ENCODE measurements at regions of chr5 and their contacts with region 1.

Region 1: GRCh38 chr5:38719916-38720315 is 125.9 kb upstream of the OSMR start:
- DNase-seq: peak; percentile 90
- H3K4me3 ChIP-seq: peak overlapping the region; percentile 11
- H3K27ac ChIP-seq: peak overlapping the region; percentile 90
- H3K4me1 ChIP-seq: peaks cover 87% of the 10 kb centered on the region
- H3K27me3 ChIP-seq: no peaks in the 10 kb centered on the region
- CTCF ChIP-seq: no peak

Region 2: DNA sequence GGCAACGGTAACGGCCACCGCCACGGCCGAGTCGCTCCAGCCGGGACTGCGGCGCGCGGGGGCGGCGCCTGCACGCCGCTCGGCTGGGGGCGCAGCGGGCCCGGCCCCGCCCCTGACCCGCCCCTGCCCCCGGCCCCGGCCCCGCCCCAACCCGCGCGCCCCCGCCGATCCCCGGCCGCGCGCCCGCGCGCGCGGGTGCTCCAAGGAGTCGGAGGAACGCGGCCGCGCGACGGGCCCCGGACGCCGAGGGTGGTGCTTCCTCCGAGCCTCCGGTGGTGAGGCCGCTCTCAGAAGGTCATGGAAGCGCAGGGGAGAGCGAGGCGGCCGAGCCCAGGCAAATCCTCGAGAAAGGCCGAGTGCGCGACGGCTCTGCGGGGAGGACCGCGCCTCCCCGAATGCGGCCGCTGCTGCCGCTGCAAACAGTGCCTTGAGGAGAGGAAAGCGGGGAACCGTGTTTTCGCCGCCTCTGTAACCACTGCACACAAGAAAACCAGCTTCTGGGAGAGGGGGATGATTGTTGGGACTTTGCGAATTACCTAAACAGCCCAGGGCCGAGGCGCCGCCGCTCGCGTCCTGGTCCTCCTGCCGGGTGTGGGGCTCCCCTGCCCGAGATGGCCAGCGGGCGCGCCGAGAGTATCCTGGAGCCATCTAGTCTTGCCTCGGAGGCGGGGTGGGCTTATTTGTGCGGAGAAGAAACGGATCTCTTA is 163.2 kb before region 1 on chr5 and contains the start of gene LIFR:
- CTCF ChIA-PET with region 1: no interaction called
- POLR2A ChIA-PET with region 1: no interaction called
- intact Hi-C with region 1: loop called (anchors 10 kb)
- DNase-seq: peak; percentile 89
- H3K4me3 ChIP-seq: peak within 1 kb of the TSS; percentile 73
- H3K27ac ChIP-seq: peak within 1 kb of the TSS; percentile 90
- H3K4me1 ChIP-seq: peaks cover 14% of the 10 kb centered on the region
- H3K27me3 ChIP-seq: no peaks in the 10 kb centered on the region
- CTCF ChIP-seq: no peak
- total RNA-seq, gene LIFR: 44.2 and 47.9 TPM in 2 replicates